ENCODE measurements at regions of chr10 and their contacts with region 1.

Region 1: DNA sequence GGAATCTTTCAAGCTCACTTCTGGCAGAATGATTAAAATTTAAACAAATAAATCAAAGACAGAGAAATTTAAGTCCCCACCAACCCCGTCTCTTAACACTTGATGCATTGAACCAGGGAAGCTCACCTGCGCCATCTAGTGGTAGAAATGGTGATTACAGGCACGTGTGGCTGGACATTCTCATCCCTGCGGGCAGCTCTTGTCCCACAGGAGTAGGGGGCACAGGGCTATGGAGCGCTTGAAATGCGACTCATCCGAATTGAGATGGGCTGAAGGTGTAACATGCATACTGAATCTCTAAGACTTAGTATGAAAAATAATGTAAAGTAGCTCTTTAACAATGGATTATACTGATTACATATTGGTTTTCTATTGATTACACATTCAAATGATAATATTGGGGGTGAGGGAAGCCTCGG is 24.8 kb upstream of the SLIT1 start:
- DNase-seq: peak in 8 of 10 donors; percentile 40 to 83 (median 73)
- H3K4me3 ChIP-seq: no peak overlapping the region
- H3K27ac ChIP-seq: no peak overlapping the region
- H3K27me3 ChIP-seq: no peaks in the 10 kb centered on the region
- CTCF ChIP-seq: peak in 55 of 56 donors; percentile 85 to 100 (median 98)

Region 2: DNA sequence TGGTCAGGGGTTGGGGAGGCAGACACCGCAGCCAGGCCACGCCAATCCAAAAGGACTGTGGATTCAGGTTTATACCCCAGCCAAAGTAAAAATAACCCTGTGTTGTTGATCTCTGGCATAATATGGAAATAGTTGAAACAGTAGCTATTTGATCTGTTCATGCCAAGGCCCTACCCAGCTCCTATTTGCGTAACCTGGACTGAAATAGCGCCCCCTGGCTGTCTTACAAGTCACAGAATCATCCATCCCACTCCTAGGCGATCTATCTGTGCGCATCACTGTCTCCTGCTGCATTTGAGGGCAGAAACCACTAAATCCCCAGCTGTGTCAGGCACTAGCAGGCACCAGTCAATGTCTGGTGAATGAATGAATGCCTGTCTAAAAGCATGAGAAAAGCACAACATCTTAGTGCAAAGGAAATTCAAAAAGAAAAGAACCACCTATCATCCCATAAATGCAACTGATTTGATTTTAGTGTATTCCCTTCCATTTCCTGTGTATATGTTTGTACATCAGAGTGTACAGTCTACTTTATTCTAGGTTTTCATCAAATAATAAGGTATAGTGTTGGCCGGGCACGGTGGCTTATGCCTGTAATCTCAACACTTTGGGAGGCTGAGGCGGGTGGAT is 184.8 kb before region 1 on chr10:
- intact Hi-C with region 1: no loop called
- DNase-seq: peak in 7 of 10 donors; percentile 28 to 79 (median 61)
- H3K4me3 ChIP-seq: no peak overlapping the region
- H3K27ac ChIP-seq: peak overlapping the region in 6 of 59 donors; percentile 4 to 60 (median 18)
- H3K27me3 ChIP-seq: no peaks in the 10 kb centered on the region
- CTCF ChIP-seq: peak; percentile 61 to 88 (median 77)

Region 3: DNA sequence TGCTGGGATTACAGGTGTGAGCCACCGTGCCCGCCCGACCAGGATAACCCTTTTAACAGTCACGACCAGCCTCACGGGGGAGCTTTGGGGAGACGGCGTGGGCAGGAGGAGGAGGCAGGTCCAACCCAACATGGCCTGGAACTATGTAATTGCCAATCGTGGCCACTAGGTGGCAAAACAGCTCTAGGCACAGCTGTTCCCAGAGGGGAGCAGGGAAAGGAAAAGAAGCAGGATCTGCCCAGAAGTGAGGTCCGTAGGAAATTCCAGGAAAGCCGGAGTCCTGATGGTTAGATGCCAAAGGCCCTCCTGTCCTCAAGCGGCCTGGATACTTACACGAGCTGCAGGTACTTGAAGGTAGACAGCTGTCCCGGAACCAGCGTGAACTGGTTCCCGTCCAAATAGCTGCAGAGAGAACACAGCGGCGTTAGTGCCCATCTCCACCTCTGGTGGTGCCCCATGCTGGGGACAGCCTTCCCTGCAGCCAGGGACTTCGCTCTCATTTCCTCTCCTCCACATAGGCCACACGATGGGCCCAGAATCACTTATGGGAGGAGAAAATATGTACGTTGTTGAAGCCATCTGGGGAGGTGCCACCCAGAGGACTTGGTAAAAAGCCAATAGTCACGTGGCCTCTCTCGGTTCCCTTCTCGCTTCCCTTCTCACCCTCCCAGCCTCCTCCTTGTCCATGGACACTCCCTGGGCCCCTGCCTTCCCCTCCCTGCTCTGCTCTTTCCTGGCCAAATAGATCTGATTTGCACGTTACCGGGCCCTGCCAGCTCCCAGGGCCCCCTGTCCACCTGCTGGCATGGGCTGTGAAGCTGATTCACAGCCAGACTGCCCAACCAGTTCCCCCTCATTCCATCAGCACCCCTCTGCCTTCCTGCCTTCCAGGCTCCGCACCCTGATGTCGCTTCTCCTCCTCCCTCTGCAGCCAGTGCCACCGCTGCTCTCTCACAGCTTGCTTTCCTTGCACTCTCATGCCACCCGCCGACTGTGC is 172.9 kb before region 1 on chr10:
- intact Hi-C with region 1: loop called in 1 of 2 experiments (anchors 1 kb)
- DNase-seq: peak; percentile 64 to 86 (median 83)
- H3K4me3 ChIP-seq: peak overlapping the region in 58 of 59 donors; percentile 0 to 70 (median 52)
- H3K27ac ChIP-seq: peak overlapping the region in 33 of 59 donors; percentile 0 to 76 (median 36)
- H3K27me3 ChIP-seq: no peaks in the 10 kb centered on the region
- CTCF ChIP-seq: peak; percentile 68 to 94 (median 89)

Region 4: DNA sequence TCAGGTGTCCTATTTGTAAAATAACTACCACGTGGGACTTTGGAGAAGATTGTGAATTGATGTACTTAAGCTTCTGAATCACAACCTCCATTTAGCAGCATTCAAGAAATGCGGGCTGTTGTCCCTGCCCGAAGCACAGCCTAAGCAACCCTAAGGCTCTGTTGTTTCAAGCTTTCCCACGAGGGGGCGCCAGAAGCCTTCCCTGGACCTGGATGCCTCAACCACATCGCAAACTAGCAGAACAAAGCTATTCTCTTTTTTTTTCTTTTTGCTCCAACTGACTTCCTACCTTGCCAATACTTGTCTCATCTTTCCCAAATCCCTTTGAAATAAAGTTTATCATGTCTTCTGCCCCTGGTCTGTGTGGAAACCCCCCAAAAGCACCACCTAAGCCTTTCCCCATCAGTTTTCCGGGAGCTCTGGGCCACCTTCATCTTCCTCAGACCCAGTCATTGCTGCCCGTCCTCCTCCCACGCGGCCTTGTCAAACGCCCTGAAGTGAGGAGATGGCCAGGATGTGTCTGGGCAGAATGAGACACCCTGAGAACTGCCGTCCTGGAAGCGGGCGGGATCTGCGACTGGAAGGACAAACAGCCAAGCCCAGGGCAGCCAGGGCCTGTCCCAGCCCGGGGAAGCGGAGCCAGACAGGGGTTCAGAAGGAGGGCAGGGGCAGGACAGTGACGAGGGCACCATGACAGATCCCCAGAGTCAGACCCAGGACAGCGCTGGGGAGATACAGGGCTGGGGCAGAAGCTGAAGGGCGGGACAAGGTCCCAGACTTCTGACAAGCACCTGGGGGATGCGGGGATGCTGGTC is 137.5 kb before region 1 on chr10:
- intact Hi-C with region 1: loop called (anchors 1 to 2 kb)
- DNase-seq: peak; percentile 80 to 95 (median 89)
- H3K4me3 ChIP-seq: no peak overlapping the region
- H3K27ac ChIP-seq: peak overlapping the region in 1 of 59 donors; percentile 25
- H3K27me3 ChIP-seq: peaks cover 0 to 11% (median 0%) of the 10 kb centered on the region in 45 donors
- CTCF ChIP-seq: peak; percentile 82 to 98 (median 95)